Testis (tissue), 5 donors: ENCODE measurements at regions of chr9 and their contacts with region 1.

Region 1: GRCh38 chr9:127586537-127586936 is 25.5 kb upstream of the STXBP1 start:
- DNase-seq: peak; percentile 92
- H3K4me3 ChIP-seq: no peak overlapping the region
- H3K27ac ChIP-seq: no peak overlapping the region
- H3K4me1 ChIP-seq: no peaks in the 10 kb centered on the region
- H3K27me3 ChIP-seq: no peaks in the 10 kb centered on the region
- CTCF ChIP-seq: peak; percentile 83 to 93 (median 91)
- POLR2A ChIP-seq: no peak

Region 2: GRCh38 chr9:127437497-127438264 is 148.9 kb before region 1 on chr9:
- intact Hi-C with region 1: no loop called
- DNase-seq: no peak
- H3K4me3 ChIP-seq: no peak overlapping the region
- H3K27ac ChIP-seq: no peak overlapping the region
- H3K4me1 ChIP-seq: no peaks in the 10 kb centered on the region
- H3K27me3 ChIP-seq: no peaks in the 10 kb centered on the region
- CTCF ChIP-seq: no peak
- POLR2A ChIP-seq: no peak

Region 3: DNA sequence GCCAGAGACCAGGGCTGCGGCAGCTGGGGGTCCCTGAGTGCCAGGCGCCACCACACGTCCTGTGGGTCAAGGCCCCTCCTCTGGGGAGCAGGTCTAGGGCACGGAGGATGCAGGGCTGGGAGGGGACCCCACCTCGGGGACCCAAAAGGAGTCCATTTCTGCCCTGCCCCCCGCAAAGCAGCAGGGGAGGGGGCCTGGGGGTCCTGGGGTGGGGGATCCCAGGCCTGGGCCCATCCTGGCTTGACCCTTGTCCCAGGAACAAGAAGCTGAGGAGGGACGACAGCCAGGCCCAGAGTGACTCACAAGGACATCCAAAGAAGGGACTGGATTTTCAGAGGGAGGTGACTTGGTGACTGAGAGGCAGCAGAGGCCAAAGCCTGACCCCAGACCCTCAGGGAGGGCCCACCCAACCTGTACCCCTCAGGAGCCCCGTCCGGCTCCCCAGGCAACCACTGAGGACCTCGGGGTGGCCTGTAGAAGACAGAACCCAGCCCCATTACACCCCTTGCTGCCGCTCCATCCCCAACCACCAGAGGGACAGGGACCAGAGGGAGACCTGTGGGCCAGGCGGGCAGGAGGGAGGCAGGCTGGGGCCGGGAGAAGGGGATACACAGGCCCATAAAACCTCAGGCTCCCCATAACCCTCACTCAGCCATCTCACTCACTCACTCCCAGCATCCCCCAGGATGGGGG is 80.9 kb before region 1 on chr9:
- intact Hi-C with region 1: loop called (anchors 5 kb)
- DNase-seq: no peak
- H3K4me3 ChIP-seq: no peak overlapping the region
- H3K27ac ChIP-seq: peak overlapping the region in 1 of 2 donors; percentile 59
- H3K4me1 ChIP-seq: peaks cover 39% of the 10 kb centered on the region
- H3K27me3 ChIP-seq: no peaks in the 10 kb centered on the region
- CTCF ChIP-seq: peak; percentile 60 to 73 (median 65)
- POLR2A ChIP-seq: no peak